Heart right ventricle (tissue), 16 donors: ENCODE measurements at regions of chr4 and their contacts with region 1.

Region 1: DNA sequence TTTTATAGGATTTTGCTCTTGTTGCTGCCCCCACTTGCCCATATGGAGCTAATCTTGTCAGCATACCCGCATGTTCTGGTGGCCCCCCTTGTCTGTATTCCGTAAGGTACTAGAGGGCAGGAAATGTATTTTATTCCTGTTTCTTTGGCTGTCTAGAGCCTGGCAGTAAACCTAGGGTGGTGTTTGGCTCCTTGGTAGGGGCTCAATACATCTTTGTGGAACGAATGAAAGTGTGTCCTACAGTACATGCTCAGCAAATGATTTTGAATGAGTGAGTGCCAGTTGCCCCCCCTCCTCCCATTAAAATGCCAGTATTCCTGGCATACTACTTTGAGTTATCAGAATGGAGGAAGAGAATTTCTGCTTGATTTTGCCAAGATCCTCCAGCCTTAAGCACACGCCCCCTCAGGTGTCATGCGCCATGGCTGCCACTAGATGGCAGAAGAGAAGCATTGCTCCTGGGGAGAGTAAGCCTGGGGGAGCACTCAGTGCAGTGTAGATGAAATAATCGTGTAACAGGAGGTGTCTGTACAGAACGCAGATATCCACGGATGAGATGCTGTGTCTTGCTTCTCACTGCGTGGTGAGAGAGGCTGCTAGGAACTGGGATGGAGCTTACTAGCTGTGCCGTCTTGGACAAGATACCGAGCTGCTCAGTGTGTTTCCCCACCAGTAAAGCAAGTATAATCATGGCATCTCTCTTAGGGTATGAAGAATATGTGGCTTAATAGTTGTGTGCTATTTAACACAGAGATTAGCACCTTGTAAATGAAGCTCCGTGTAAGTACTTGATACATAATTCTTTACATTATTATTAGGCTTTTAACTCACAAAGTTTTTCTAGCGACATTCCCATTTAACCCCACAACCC is 17.2 kb upstream of the RNF212 start:
- DNase-seq: peak; percentile 49 to 56
- ATAC-seq: peak; percentile 90 to 96 (median 95)
- H3K4me3 ChIP-seq: no peak overlapping the region
- H3K27ac ChIP-seq: no peak overlapping the region
- H3K4me1 ChIP-seq: peaks cover 0 to 6% (median 0%) of the 10 kb centered on the region in 9 donors
- H3K27me3 ChIP-seq: peaks cover 0 to 24% (median 5%) of the 10 kb centered on the region in 7 donors
- CTCF ChIP-seq: peak; percentile 97 to 100 (median 99)

Region 2: GRCh38 chr4:1082215-1083182 is 48.1 kb before region 1 on chr4:
- intact Hi-C with region 1: no loop called
- DNase-seq: peak; percentile 24 to 34
- ATAC-seq: peak; percentile 43 to 96 (median 60)
- H3K4me3 ChIP-seq: no peak overlapping the region
- H3K27ac ChIP-seq: no peak overlapping the region
- H3K4me1 ChIP-seq: peaks cover 0 to 14% (median 0%) of the 10 kb centered on the region in 9 donors
- H3K27me3 ChIP-seq: peaks cover 0 to 56% (median 33%) of the 10 kb centered on the region in 7 donors
- CTCF ChIP-seq: no peak

Region 3: DNA sequence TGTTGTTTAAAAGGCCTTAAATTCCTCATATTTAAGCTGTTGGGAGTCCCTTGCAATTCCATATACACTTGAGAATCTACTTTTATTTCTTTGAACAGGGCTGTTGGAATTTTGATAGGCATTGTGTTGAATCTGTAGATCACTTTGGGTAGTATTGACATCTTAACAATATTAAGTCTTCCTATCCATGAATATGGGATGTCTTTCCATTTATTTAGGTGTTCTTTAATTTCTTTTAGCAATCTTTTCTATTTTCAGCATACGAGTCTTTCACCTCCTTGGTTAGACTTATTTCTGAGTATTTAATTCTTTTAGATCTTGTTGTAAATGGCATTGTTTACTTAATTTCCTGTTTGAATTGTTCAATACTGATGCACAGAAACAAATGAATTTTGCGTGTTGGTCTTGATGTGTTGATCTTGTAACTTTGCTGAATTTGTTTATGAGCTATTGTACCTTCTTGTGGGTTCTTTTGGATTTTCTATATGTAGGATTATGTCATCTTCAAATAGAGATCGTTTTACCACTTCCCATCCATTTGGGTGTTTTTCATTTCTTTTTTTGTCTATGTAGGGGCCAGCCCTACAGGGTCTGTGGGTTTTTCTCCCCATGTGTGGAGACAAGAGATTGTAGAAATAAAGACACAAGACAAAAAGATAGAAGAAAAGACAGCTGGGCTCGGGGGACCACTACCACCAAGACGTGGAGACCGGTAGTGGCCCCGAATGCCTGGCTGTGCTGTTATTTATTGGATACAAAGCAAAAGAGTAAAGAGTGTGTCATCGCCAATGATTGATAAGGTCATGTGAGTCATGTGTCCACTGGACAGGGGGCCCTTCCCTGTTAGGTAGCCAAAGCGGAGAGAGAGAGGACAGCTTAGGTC is 136.6 kb after region 1 on chr4:
- intact Hi-C with region 1: loop called in 8 of 10 experiments (anchors 2 to 5 kb)
- DNase-seq: no peak
- ATAC-seq: no peak
- H3K4me3 ChIP-seq: no peak overlapping the region
- H3K27ac ChIP-seq: peak overlapping the region in 1 of 10 donors; percentile 36
- H3K4me1 ChIP-seq: peaks cover 0 to 4% (median 0%) of the 10 kb centered on the region in 9 donors
- H3K27me3 ChIP-seq: no peaks in the 10 kb centered on the region
- CTCF ChIP-seq: no peak

Region 4: DNA sequence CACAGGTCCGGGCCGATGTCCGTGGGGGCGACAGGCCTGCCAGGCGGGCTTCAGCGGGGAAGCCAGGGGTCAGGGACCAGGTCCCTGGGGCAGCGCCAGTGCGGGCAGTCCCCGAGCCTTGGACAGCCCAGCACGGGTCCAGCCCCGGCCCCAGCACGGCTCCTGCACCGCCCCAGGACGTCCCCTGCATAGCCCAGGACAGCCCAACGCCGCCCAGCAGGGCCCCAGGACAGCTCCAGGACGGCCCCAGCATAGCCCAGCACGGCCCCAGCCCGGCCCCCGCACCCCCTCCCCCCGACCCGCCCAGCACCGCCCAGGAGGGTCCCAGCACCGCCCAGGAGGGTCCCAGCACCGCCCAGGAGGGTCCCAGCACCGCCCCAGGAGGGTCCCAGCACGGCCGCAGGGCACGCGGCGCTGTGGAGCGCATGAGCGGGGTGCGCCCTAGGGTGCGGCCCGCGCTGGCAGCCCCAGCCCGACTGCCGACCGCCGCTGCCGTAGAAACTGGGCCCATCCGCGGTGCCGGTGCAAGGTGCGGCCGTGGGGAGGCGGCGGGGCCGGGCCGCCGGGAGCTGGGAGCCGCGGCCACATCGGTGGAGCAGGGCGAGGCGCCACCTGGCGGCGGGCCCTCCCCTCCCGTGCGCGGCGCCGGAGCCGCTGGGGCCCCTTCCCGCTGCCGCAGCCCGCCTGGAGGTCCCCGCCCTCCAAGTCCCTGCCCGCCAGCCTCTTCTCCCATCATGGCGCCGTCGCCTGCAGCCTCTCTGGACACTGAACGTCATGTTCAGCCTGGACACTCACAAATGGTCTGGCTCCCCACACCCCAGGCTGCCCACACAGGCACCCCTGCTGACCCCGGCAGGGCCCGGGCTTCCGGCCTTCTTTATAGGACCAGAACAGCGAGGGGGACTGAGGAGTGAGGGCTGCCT is 382.4 kb after region 1 on chr4:
- intact Hi-C with region 1: loop called in 1 of 10 experiments (anchors 10 kb)
- DNase-seq: peak in 1 of 2 donors; percentile 49
- ATAC-seq: peak; percentile 43 to 79 (median 76)
- H3K4me3 ChIP-seq: peak overlapping the region in 8 of 10 donors; percentile 6 to 34 (median 21)
- H3K27ac ChIP-seq: peak overlapping the region in 1 of 10 donors; percentile 18
- H3K4me1 ChIP-seq: peaks cover 0 to 8% (median 0%) of the 10 kb centered on the region in 9 donors
- H3K27me3 ChIP-seq: peaks cover 5 to 72% (median 52%) of the 10 kb centered on the region in 7 donors
- CTCF ChIP-seq: peak; percentile 48 to 74 (median 64)

Region 5: DNA sequence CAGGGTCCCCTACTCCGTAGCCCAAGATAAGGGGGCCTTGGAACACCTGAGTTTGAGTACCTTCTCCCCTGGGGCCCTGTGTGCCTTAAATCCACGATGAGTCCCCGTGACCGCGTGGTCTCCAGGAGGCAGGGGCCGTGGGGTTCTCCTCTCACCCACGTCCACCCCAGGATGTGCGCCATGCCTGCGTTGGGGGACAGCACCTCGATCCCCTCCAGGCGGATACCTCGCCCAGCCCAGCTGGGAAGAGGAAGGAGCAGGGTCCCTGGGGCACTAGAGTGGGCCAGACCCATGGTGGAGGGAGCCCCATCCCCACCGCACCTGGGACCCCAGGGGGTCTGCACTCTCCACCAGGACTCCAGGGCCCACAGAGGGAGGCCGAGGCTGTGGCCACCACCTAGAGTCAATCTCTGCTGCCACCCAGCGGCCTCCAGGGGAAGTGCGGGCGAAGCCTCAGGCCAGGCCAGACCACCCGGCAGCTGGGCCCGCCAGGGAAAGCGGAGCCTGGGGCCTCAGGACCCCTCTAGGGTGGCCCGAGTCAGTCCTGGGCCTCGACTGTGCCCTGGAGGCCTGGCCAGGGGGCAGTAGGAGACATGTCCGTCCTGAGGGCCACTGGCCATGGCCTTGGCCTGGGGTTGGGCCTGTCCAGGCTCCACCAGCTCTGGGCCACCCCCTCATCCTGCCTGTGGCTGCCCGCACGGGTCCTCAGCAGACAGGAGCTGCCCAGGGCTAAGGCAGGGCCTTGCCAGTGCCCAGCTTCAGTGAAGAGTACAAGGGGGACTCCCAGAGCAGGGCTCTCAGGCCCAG is 498.5 kb after region 1 on chr4:
- intact Hi-C with region 1: loop called in 1 of 10 experiments (anchors 10 kb)
- DNase-seq: peak; percentile 39 to 62
- ATAC-seq: peak; percentile 44 to 81 (median 78)
- H3K4me3 ChIP-seq: no peak overlapping the region
- H3K27ac ChIP-seq: no peak overlapping the region
- H3K4me1 ChIP-seq: peaks cover 0 to 8% (median 0%) of the 10 kb centered on the region in 9 donors
- H3K27me3 ChIP-seq: peaks cover 0 to 7% (median 0%) of the 10 kb centered on the region in 7 donors
- CTCF ChIP-seq: peak; percentile 95 to 98 (median 98)